ENCODE measurements at regions of chr7 and their contacts with region 1.

Region 1: DNA sequence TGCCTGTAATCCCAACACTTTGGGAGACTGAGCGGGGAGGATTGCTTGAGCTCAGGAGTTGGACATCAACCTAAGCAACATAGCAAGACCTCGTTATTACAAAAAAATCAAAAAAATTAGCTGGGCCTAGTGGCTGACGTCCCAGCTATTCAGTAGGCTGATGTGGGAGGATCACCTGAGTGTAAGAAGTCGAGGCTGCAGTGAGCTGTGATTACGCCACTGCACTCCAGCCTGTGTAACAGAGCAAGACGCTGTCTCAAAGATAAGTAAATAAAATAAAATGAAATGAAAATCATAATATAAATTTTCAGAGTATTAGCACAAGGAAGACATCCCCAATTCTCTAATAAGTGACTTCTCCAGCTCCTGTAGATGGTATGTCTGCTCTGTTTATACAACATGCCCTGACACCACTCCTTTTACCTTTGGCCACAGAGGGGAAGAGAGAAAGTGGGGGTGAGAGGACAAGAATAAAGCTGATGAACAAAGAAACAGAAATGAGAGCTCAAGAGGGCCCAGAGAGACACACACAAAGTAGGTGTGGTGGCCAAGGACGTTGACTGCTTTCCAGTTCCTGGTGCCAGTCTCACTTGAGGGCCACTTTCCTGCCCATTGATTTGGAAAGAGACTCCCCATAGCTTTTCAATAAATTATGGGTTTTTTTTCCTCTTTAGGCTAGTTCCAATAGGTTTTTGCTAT is 62.9 kb downstream of the PTTG1IP2 start:
- DNase-seq: no peak
- ATAC-seq: no peak
- H3K4me3 ChIP-seq: no peak overlapping the region
- H3K4me1 ChIP-seq: no peaks in the 10 kb centered on the region
- CTCF ChIP-seq: no peak

Region 2: DNA sequence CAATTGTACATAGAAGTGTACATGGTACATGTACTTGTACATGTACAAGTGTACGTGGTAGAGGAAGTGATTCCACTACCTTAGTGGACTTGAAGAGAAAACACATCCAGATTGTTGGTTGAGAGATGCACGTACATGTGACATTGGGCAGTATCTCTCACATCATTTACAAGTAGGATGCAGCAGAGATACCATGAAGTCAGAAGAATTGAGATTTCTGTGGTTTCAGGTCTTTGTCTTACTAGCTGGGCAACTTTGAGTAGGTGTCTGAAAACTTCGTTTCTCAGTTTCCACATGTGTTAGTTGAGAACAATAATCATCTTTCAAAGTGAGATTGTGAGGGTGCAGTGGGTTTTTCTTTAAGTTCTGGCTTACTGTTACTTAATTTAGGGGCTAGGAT is 107.7 kb before region 1 on chr7:
- intact Hi-C with region 1: no loop called
- DNase-seq: no peak
- ATAC-seq: no peak
- H3K4me3 ChIP-seq: no peak overlapping the region
- H3K4me1 ChIP-seq: no peaks in the 10 kb centered on the region
- CTCF ChIP-seq: no peak

Region 3: DNA sequence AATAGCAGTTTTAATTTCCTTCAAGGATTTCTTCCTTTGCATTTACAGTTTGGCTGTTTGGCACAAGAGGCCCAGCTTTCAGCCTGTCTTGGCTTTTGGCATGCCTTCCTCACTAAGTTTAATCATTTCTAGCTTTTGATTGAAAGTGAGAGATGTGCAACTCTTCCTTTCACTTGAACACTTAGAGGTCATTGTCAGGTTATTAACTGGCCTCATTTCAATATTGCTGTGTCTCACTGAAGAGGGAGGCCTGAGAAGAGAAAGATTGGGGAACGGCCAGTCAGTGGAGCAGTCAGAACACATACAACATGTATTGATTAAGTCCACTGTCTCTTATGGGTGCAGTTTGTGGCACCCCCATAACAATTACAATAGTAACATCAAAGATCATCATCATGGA is 29.0 kb before region 1 on chr7:
- intact Hi-C with region 1: loop called in 1 of 2 experiments (anchors 2 kb)
- DNase-seq: no peak
- ATAC-seq: no peak
- H3K4me3 ChIP-seq: no peak overlapping the region
- H3K4me1 ChIP-seq: no peaks in the 10 kb centered on the region
- CTCF ChIP-seq: no peak